CD14-positive monocyte (primary cell): ENCODE measurements at regions of chr19 and their contacts with region 1.

Region 1: DNA sequence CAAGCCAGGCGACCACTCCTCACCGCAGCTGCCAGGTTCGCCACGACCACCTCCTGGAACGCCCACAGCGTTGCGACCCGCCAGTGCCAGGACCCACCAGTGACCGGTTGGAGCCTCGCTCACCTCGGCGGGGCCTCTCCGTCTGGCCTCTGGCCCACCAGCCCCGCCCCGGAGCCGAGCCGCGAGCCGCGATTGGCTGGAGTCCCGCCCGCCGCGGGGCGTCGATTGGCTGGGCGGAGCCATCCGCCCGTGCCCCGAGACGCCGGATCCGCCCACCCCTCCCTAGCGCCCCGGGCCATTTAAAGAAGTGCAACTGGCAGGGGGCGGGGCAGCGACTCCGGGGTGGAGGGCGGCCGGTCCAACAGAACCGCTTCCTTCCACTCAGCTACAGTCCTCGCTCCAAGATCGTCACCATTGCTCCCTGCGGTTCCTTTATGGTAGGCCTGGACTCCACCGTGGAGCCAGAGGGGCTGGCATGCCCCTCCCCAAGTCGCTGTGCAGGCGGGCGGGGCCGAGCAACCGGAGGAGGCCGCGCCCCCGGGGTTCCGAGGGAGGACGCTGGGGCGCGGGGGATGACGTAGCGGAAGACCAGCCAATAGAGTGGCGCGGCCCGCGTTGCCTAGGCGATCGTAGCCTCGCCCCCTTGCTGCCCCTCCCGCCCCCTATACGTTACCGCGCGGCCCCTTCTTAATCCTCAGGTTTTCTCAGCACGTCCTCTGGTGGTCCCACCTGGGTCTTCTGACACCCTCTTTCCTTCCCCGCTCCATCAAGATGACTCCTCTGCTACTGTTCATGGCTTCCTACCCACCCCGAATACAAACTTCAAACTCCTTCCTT is at the start of gene SERTAD3:
- DNase-seq: peak; percentile 93 to 94 (median 93)
- H3K4me3 ChIP-seq: peak within 1 kb of the TSS; percentile 87 to 100 (median 100)
- H3K4me3 Mint-ChIP-seq: peak within 1 kb of the TSS; percentile 100
- H3K27ac ChIP-seq: peak within 1 kb of the TSS; percentile 95 to 97
- H3K27ac Mint-ChIP-seq: peak within 1 kb of the TSS; percentile 97 to 100 (median 98)
- H3K4me1 ChIP-seq: peaks cover 28 to 32% of the 10 kb centered on the region in 2 donors
- H3K4me1 Mint-ChIP-seq: peaks cover 27% of the 10 kb centered on the region
- H3K27me3 ChIP-seq: no peaks in the 10 kb centered on the region
- H3K27me3 Mint-ChIP-seq: peaks cover 0 to 1% (median 0%) of the 10 kb centered on the region in 3 donors
- CTCF ChIP-seq: no peak
- polyA plus RNA-seq, gene SERTAD3: 30.4 to 57.2 (median 49.4) TPM

Region 2: DNA sequence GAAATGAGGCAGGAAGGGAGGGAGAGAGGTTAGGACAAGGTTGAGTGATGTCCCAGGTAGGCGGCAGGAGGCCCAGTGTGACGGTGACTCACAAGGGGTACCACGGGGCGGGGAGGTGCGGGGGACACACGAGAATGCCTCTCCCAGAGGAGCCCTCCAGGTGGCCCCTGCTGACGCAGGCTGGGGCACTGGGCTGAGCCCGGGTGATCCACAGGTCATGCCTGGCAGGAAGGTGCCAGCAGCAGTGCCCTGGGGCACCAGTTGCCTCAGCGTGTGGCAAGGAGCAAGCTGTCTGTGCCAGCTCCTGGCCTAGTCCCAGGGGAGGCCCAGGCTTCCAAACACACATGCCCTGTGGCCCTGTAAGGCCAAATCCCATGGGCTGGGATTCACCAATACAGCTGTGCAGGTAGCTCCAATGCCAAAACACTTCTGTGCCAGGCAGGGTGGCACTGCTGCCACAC is 187.3 kb before region 1 on chr19:
- intact Hi-C with region 1: no loop called
- DNase-seq: no peak
- H3K4me3 ChIP-seq: no peak overlapping the region
- H3K4me3 Mint-ChIP-seq: no peak overlapping the region
- H3K27ac ChIP-seq: no peak overlapping the region
- H3K27ac Mint-ChIP-seq: no peak overlapping the region
- H3K4me1 ChIP-seq: peaks cover 12 to 14% of the 10 kb centered on the region in 2 donors
- H3K4me1 Mint-ChIP-seq: peaks cover 15% of the 10 kb centered on the region
- H3K27me3 ChIP-seq: no peaks in the 10 kb centered on the region
- H3K27me3 Mint-ChIP-seq: peaks cover 0 to 4% (median 0%) of the 10 kb centered on the region in 3 donors
- CTCF ChIP-seq: no peak

Region 3: GRCh38 chr19:40285353-40286234 is 158.8 kb before region 1 on chr19:
- intact Hi-C with region 1: loop called in 1 of 2 experiments (anchors 5 kb)
- DNase-seq: peak; percentile 100
- H3K4me3 ChIP-seq: peak overlapping the region; percentile 64 to 87 (median 77)
- H3K4me3 Mint-ChIP-seq: peak overlapping the region; percentile 94 to 95
- H3K27ac ChIP-seq: peak overlapping the region; percentile 89 to 96
- H3K27ac Mint-ChIP-seq: peak overlapping the region; percentile 99 to 100 (median 100)
- H3K4me1 ChIP-seq: peaks cover 20 to 26% of the 10 kb centered on the region in 2 donors
- H3K4me1 Mint-ChIP-seq: peaks cover 31% of the 10 kb centered on the region
- H3K27me3 ChIP-seq: no peaks in the 10 kb centered on the region
- H3K27me3 Mint-ChIP-seq: peaks cover 0 to 2% (median 2%) of the 10 kb centered on the region in 3 donors
- CTCF ChIP-seq: no peak

Region 4: GRCh38 chr19:40360708-40361241 is 83.6 kb before region 1 on chr19:
- intact Hi-C with region 1: loop called in 1 of 2 experiments (anchors 5 kb)
- DNase-seq: peak; percentile 73 to 93 (median 85)
- H3K4me3 ChIP-seq: peak overlapping the region in 1 of 3 experiments; percentile 52
- H3K4me3 Mint-ChIP-seq: peak overlapping the region; percentile 53 to 66
- H3K27ac ChIP-seq: peak overlapping the region; percentile 89 to 90
- H3K27ac Mint-ChIP-seq: peak overlapping the region; percentile 92 to 98 (median 97)
- H3K4me1 ChIP-seq: peaks cover 100% of the 10 kb centered on the region in 2 donors
- H3K4me1 Mint-ChIP-seq: peaks cover 90% of the 10 kb centered on the region
- H3K27me3 ChIP-seq: no peaks in the 10 kb centered on the region
- H3K27me3 Mint-ChIP-seq: peaks cover 0 to 3% (median 3%) of the 10 kb centered on the region in 3 donors
- CTCF ChIP-seq: no peak

Region 5: GRCh38 chr19:40425450-40426287 is 18.7 kb before region 1 on chr19 and contains the start of gene SERTAD1:
- intact Hi-C with region 1: loop called (anchors 1 kb)
- DNase-seq: peak; percentile 99
- H3K4me3 ChIP-seq: peak within 1 kb of the TSS; percentile 93 to 97 (median 94)
- H3K4me3 Mint-ChIP-seq: peak within 1 kb of the TSS; percentile 99
- H3K27ac ChIP-seq: peak within 1 kb of the TSS; percentile 97 to 99
- H3K27ac Mint-ChIP-seq: peak within 1 kb of the TSS; percentile 94 to 100 (median 98)
- H3K4me1 ChIP-seq: peaks cover 19 to 28% of the 10 kb centered on the region in 2 donors
- H3K4me1 Mint-ChIP-seq: peaks cover 21% of the 10 kb centered on the region
- H3K27me3 ChIP-seq: no peaks in the 10 kb centered on the region
- H3K27me3 Mint-ChIP-seq: peaks cover 0 to 3% (median 0%) of the 10 kb centered on the region in 3 donors
- CTCF ChIP-seq: peak; percentile 77
- polyA plus RNA-seq, gene SERTAD1: 21.0 to 55.9 (median 21.6) TPM

Region 6: GRCh38 chr19:40502647-40503319 is 58.4 kb after region 1 on chr19:
- intact Hi-C with region 1: no loop called
- DNase-seq: no peak
- H3K4me3 ChIP-seq: no peak overlapping the region
- H3K4me3 Mint-ChIP-seq: no peak overlapping the region
- H3K27ac ChIP-seq: no peak overlapping the region
- H3K27ac Mint-ChIP-seq: peak overlapping the region in 2 of 7 donors; percentile 9 to 38
- H3K4me1 ChIP-seq: no peaks in the 10 kb centered on the region
- H3K4me1 Mint-ChIP-seq: no peaks in the 10 kb centered on the region
- H3K27me3 ChIP-seq: peaks cover 0 to 4% of the 10 kb centered on the region in 2 donors
- H3K27me3 Mint-ChIP-seq: peaks cover 6 to 29% (median 9%) of the 10 kb centered on the region in 3 donors
- CTCF ChIP-seq: no peak

Region 7: DNA sequence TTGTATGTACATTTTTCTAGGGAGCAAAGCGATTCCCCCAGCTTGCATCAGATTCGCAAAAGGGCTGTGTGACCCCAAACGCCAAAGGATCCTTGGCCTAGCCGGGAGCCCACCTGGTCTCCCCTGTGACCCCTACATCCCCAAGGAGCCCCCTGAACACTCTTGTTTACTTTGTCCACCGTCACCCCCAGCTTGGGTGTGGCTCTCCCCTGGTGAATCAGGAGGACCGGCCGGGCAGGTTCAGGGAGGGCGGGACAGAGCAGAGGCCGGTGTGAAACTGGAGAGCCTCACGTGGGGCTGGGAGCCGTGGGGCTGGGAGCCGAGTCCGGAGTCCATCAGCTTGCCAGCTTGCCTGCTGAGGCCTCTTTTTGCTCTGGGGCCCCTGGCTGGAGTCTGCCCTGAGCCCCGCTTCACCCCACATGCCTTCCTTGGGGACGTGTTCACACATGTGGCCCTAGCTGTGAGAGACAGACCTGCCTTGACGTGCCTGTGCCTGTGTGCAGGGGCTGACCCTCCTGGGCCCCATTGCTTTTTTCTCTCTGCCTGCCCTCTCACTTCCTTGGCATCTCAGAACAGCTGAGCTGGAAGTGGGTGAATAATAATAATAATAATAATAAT is 274.5 kb after region 1 on chr19:
- intact Hi-C with region 1: no loop called
- DNase-seq: peak in 1 of 3 donors; percentile 20
- H3K4me3 ChIP-seq: peak overlapping the region in 2 of 3 experiments; percentile 15 to 91
- H3K4me3 Mint-ChIP-seq: peak overlapping the region; percentile 84 to 94
- H3K27ac ChIP-seq: peak overlapping the region in 1 of 2 donors; percentile 96
- H3K27ac Mint-ChIP-seq: peak overlapping the region; percentile 20 to 89 (median 72)
- H3K4me1 ChIP-seq: peaks cover 60 to 67% of the 10 kb centered on the region in 2 donors
- H3K4me1 Mint-ChIP-seq: peaks cover 76% of the 10 kb centered on the region
- H3K27me3 ChIP-seq: no peaks in the 10 kb centered on the region
- H3K27me3 Mint-ChIP-seq: peaks cover 0 to 8% (median 4%) of the 10 kb centered on the region in 3 donors
- CTCF ChIP-seq: no peak